ENCODE measurements at regions of chr9 and their contacts with region 1.

Region 1: GRCh38 chr9:112091810-112092209 is 83.3 kb downstream of the SUSD1 start:
- DNase-seq: peak in 1 of 3 donors; percentile 41
- ATAC-seq: no peak
- H3K4me3 ChIP-seq: no peak overlapping the region
- H3K27ac ChIP-seq: no peak overlapping the region
- H3K4me1 ChIP-seq: no peaks in the 10 kb centered on the region
- H3K27me3 ChIP-seq: no peaks in the 10 kb centered on the region

Region 2: DNA sequence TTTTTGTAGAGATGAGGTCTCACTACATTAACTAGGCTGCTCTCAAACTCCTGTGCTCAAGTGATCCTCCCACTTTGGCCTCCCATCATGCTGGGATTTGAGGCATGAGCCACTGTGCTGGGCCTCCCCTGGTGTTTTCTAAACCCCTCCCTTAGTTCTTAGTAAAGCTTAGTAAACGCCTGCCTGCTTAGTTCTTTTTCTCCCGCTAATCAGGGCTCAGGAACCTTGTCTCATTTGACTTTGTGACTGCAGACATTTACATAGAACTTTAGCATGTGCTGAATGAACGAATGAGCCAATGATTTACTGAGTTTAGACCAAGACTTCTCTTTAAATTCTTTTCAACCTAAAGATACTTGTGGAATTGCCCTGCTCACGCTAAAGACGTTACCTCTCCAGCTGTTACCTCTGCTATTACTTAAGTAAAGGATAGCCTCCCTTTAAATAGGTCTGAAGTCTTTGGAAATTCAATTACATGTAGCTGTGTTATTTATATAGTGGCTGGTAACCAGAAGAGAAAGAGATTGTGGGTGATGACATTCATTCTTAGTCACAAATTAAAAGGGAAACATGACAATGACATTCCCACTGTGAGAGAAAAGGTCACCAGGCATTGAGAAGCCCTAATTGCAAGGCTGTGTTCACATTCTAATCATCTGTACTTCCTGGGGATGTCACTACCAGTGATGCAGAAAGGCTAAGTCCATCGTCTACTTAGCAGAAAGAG is 101.9 kb after region 1 on chr9:
- intact Hi-C with region 1: no loop called
- DNase-seq: no peak
- ATAC-seq: peak in 1 of 2 donors; percentile 57
- H3K4me3 ChIP-seq: no peak overlapping the region
- H3K27ac ChIP-seq: peak overlapping the region; percentile 47
- H3K4me1 ChIP-seq: peaks cover 2% of the 10 kb centered on the region
- H3K27me3 ChIP-seq: no peaks in the 10 kb centered on the region

Region 3: GRCh38 chr9:112355427-112355897 is 263.7 kb after region 1 on chr9:
- intact Hi-C with region 1: loop called (anchors 5 kb)
- DNase-seq: peak; percentile 35 to 70 (median 58)
- ATAC-seq: no peak
- H3K4me3 ChIP-seq: no peak overlapping the region
- H3K27ac ChIP-seq: no peak overlapping the region
- H3K4me1 ChIP-seq: no peaks in the 10 kb centered on the region
- H3K27me3 ChIP-seq: no peaks in the 10 kb centered on the region

Measured in right cardiac atrium (tissue), 5 donors.